ENCODE measurements at regions of chr1 and their contacts with region 1.

Region 1: DNA sequence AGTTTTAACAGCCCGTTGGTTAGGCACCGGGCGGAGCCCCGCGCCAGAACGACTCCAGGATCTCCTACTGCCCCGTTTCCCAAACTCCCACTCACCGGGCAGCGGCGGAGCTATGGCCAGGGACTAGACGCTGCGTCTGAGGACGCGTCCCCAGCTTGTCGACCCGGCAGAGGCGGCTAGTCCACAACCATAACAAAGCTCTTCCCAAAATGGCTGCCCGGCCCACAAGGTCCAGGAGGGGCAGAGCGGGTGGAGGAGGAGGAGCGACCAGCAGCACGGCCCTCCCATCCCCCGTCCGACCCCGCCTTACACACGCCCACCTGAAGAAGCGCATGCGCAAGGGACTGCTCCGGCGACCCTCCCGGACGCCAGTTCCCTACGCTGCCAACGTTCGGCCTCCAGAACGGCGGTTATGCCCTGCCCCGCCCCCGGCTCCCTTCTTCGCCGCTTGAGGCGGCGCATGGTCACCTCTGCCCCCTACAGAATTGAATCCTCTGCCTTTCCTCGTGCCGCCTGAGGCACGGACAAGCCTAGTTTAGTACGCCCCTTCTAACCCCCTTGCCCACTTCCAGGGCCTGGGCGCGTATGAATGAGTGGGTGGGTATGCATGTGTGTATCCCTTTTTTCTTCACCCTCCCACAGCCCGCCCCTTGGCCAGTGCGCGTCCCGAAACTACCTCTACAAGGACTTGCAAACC is at the start of gene GPBP1L1:
- DNase-seq: peak; percentile 99
- H3K4me3 Mint-ChIP-seq: peak within 1 kb of the TSS; percentile 98
- H3K27ac Mint-ChIP-seq: peak within 1 kb of the TSS; percentile 100
- H3K4me1 Mint-ChIP-seq: peaks cover 50% of the 10 kb centered on the region
- H3K27me3 Mint-ChIP-seq: no peaks in the 10 kb centered on the region
- total RNA-seq, gene GPBP1L1: 113 to 122 TPM

Region 2: DNA sequence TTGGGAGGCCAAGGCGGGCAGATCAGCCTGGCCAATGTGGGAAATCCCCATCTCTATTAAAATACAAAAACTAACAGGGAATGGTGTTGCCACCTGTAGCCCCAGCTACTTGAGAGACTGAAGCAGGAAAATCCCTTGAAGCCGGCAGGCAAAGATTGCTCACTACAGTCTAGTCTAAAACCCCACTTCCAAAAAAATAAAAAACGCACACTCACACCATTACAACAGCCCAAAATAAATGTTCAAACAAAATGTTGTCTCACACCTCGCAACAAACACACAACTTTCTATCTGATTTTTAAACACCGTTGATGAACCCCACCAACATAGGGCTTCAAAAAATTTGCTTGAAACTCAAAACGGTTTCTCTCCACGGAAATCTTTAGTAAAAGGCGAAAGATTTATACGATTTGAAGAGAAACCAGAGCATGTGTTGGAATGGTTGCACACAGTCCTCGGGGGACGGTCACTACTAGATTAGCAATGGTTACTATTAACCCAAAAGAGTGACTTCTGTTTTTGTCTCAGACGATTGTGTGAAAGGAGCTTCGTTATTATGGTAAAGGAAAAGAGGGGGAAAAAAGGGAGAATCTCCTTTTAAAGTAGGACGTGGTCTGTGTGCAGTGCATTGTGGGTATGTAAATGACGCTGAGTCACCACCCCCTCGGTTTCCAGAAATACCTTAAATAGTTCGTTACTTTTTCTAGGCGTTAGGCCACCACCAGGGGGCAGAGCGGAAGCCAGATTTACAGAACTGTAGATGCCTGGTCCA is 955.5 kb before region 1 on chr1 and contains the start of gene RNU5D-1:
- CTCF ChIA-PET with region 1: no interaction called
- intact Hi-C with region 1: loop called (anchors 2 kb)
- DNase-seq: peak; percentile 99
- H3K4me3 Mint-ChIP-seq: peak within 1 kb of the TSS; percentile 57
- H3K27ac Mint-ChIP-seq: peak within 1 kb of the TSS; percentile 99
- H3K4me1 Mint-ChIP-seq: peaks cover 46% of the 10 kb centered on the region
- H3K27me3 Mint-ChIP-seq: peaks cover 3% of the 10 kb centered on the region
- total RNA-seq, gene RNU5D-1: not detected

Region 3: DNA sequence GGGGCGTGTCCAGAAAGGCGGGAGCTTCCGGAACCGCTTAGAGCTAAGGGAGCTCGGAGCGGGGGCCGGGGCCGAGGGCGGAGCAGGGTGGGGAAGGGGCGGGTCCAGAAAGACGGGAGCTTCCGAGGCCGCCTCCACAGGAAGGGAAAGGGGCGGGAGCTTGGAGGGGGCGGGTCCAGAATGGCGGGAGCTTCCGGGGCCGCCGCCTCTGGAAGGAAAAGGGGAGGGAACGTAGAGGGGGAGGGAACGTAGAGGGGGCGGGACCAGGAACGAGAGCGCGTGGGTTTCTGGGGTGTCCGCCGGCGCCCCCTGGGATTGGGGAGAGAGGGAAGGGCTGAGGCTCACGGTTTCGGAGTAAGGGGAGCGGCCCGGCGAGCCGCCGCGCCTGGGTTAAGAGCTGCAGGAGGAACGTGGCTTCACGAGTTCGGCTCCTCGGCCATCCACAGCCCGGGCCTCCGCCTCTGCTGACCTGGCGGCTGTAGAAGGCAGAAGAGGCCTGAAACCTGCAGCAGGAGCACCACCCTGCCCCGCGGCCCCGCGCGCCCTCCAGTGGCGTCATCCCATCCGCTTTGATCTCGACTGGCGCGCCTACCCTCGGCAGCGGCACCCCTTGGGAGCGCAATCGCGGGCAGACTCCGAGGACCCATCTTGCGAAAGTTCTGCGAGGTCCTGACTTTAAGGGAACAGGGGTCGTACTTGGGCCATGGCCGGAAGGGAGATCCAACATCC is 382.7 kb before region 1 on chr1:
- CTCF ChIA-PET with region 1: interaction called, 3 read pairs
- intact Hi-C with region 1: loop called (anchors 1 kb)
- DNase-seq: peak; percentile 100
- H3K4me3 Mint-ChIP-seq: peak overlapping the region; percentile 91
- H3K27ac Mint-ChIP-seq: peak overlapping the region; percentile 94
- H3K4me1 Mint-ChIP-seq: peaks cover 33% of the 10 kb centered on the region
- H3K27me3 Mint-ChIP-seq: no peaks in the 10 kb centered on the region

Region 4: GRCh38 chr1:45543581-45544417 is 142.7 kb before region 1 on chr1:
- CTCF ChIA-PET with region 1: interaction called, 4 read pairs
- intact Hi-C with region 1: loop called (anchors 1 kb)
- DNase-seq: peak; percentile 90
- H3K4me3 Mint-ChIP-seq: peak overlapping the region; percentile 25
- H3K27ac Mint-ChIP-seq: peak overlapping the region; percentile 74
- H3K4me1 Mint-ChIP-seq: peaks cover 34% of the 10 kb centered on the region
- H3K27me3 Mint-ChIP-seq: no peaks in the 10 kb centered on the region

Region 5: GRCh38 chr1:45750298-45751038 is 64.0 kb after region 1 on chr1 and contains the start of gene IPP:
- CTCF ChIA-PET with region 1: no interaction called
- intact Hi-C with region 1: loop called (anchors 1 kb)
- DNase-seq: peak; percentile 96
- H3K4me3 Mint-ChIP-seq: peak within 1 kb of the TSS; percentile 95
- H3K27ac Mint-ChIP-seq: peak within 1 kb of the TSS; percentile 97
- H3K4me1 Mint-ChIP-seq: peaks cover 31% of the 10 kb centered on the region
- H3K27me3 Mint-ChIP-seq: no peaks in the 10 kb centered on the region
- total RNA-seq, gene IPP: 19.1 to 20.2 TPM

Region 6: GRCh38 chr1:46247436-46248121 is 561.1 kb after region 1 on chr1 and contains the start of gene RAD54L:
- CTCF ChIA-PET with region 1: no interaction called
- intact Hi-C with region 1: loop called (anchors 2 kb)
- DNase-seq: peak; percentile 99
- H3K4me3 Mint-ChIP-seq: peak within 1 kb of the TSS; percentile 99
- H3K27ac Mint-ChIP-seq: peak within 1 kb of the TSS; percentile 92
- H3K4me1 Mint-ChIP-seq: peaks cover 23% of the 10 kb centered on the region
- H3K27me3 Mint-ChIP-seq: no peaks in the 10 kb centered on the region
- total RNA-seq, gene RAD54L: 83.9 to 88.0 TPM